ENCODE measurements at regions of chr15 and their contacts with region 1.

Region 1: DNA sequence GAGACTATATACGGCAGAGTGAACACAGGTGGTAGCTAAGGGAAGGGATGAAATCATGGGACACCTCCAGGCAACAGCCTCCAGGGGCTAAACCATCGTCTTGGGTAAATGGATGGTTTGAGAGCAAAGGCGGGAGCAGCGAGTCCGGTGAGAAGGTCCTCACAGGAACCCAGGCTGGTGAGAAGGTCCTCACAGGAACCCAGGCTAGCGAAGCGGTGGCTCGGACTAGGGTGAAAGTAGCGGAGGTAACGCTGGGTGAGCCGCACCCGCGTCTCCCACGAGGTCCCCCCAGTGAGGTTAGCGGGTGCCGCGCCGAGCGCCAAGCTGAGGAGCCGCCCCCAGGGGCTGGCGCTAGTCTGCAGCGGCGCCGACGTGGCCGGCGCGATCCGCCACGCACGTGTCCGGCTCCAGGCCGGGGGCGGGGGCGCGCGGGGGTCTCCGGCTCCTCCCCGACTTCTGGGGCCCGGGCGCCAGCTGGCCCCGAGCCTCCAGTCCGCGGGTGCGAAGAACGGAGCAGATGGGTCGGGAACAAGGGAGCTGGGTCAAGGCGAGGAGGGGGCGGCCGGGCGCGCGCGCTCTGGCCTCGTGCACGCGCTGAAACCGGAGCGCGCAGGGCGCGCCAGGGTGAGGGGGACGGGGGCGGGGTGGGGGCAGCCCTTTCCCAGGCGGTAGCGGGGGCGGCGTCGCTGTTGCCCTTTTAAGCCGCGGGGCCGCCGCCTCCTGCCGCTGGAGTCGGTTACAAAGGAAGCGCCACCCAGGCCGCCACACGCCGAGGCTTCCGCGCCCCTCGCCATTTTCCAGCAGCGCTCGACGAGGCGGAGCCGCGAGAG is at the start of gene UBE2Q2:
- DNase-seq: peak; percentile 91
- H3K4me3 ChIP-seq: peak within 1 kb of the TSS; percentile 64 to 99 (median 93)
- H3K27ac ChIP-seq: peak within 1 kb of the TSS; percentile 88 to 96 (median 94)
- H3K4me1 ChIP-seq: peaks cover 32 to 59% (median 47%) of the 10 kb centered on the region in 6 donors
- H3K27me3 ChIP-seq: no peaks in the 10 kb centered on the region
- CTCF ChIP-seq: peak in 1 of 11 experiments; percentile 15
- POLR2A ChIP-seq: no peak
- total RNA-seq, gene UBE2Q2: 22.9 to 38.0 (median 31.2) TPM

Region 2: GRCh38 chr15:75801859-75802593 is 40.9 kb before region 1 on chr15:
- intact Hi-C with region 1: no loop called
- DNase-seq: peak; percentile 95
- H3K4me3 ChIP-seq: peak overlapping the region in 3 of 8 donors; percentile 14 to 48 (median 18)
- H3K27ac ChIP-seq: no peak overlapping the region
- H3K4me1 ChIP-seq: peaks cover 4 to 13% (median 7%) of the 10 kb centered on the region in 6 donors
- H3K27me3 ChIP-seq: peaks cover 0 to 50% (median 5%) of the 10 kb centered on the region in 7 donors
- CTCF ChIP-seq: peak; percentile 71 to 96 (median 91)
- POLR2A ChIP-seq: no peak

Region 3: DNA sequence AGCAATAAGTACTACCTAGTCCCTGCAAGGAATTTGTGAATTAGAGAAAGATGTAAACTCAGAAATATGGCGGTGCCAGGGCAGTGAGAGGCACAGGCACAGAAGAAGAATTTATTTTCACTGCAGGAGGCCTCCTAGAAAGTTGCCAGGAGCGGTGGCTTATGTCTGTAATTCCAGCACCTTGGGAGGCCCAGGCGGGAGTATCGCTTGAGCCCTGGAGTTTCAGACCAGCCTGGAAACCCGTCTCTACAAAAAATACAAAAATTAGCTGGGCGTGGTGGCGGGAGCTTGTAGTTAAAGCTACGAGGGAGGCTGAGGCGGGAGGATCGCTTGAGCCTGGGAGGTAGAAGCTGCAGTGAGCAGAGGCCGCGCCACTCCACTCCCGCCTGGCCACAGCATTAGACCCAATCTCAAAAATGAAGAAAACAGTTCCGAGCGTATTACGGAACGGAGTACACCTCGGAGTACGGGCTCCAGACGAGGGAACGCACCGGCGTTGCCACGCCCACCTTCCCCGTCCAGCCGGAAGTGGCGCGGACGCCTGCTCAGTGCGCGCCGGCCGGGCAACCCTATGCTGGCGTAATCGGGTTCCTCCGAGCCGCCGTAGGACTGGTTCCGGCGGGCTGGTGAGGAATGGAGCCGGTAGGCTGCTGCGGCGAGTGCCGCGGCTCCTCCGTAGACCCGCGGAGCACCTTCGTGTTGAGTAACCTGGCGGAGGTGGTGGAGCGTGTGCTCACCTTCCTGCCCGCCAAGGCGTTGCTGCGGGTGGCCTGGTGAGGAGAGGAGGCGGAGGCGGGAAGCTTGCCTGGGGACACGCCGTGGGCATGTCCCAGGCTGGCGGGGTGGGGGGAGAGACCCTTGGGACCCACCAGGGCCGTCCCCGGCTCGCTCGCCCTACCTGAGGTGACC is 60.6 kb after region 1 on chr15 and contains the start of gene FBXO22:
- intact Hi-C with region 1: loop called (anchors 10 kb)
- DNase-seq: peak; percentile 99
- H3K4me3 ChIP-seq: peak within 1 kb of the TSS; percentile 81 to 99 (median 92)
- H3K27ac ChIP-seq: peak within 1 kb of the TSS; percentile 75 to 91 (median 87)
- H3K4me1 ChIP-seq: peaks cover 5 to 66% (median 35%) of the 10 kb centered on the region in 6 donors
- H3K27me3 ChIP-seq: no peaks in the 10 kb centered on the region
- CTCF ChIP-seq: peak in 1 of 11 experiments; percentile 32
- POLR2A ChIP-seq: peak in 2 of 3 donors; percentile 41 to 47
- total RNA-seq, gene FBXO22: 14.6 to 24.9 (median 22.0) TPM